CD14-positive monocyte (primary cell): ENCODE measurements at regions of chr7 and their contacts with region 1.

Region 1: GRCh38 chr7:24979863-24980533 is at the start of gene OSBPL3:
- DNase-seq: peak; percentile 92 to 96 (median 93)
- H3K4me3 ChIP-seq: peak within 1 kb of the TSS; percentile 87 to 94 (median 93)
- H3K4me3 Mint-ChIP-seq: peak within 1 kb of the TSS; percentile 98 to 99
- H3K27ac ChIP-seq: peak within 1 kb of the TSS; percentile 69 to 93
- H3K27ac Mint-ChIP-seq: peak within 1 kb of the TSS; percentile 90 to 97 (median 95)
- H3K4me1 ChIP-seq: peaks cover 34 to 51% of the 10 kb centered on the region in 2 donors
- H3K4me1 Mint-ChIP-seq: peaks cover 46% of the 10 kb centered on the region
- H3K27me3 ChIP-seq: peaks cover 4 to 11% of the 10 kb centered on the region in 2 donors
- H3K27me3 Mint-ChIP-seq: peaks cover 14 to 25% (median 14%) of the 10 kb centered on the region in 3 donors
- CTCF ChIP-seq: peak; percentile 32
- polyA plus RNA-seq, gene OSBPL3: 2.6 to 9.2 (median 3.7) TPM

Region 2: GRCh38 chr7:25087855-25088254 is 107.9 kb after region 1 on chr7:
- intact Hi-C with region 1: loop called in 1 of 2 experiments (anchors 5 kb)
- DNase-seq: peak; percentile 71 to 79 (median 73)
- H3K4me3 ChIP-seq: no peak overlapping the region
- H3K4me3 Mint-ChIP-seq: peak overlapping the region in 1 of 2 donors; percentile 37
- H3K27ac ChIP-seq: no peak overlapping the region
- H3K27ac Mint-ChIP-seq: peak overlapping the region in 1 of 7 donors; percentile 16
- H3K4me1 ChIP-seq: peaks cover 14% of the 10 kb centered on the region in 2 donors
- H3K4me1 Mint-ChIP-seq: peaks cover 14% of the 10 kb centered on the region
- H3K27me3 ChIP-seq: no peaks in the 10 kb centered on the region
- H3K27me3 Mint-ChIP-seq: peaks cover 2 to 6% (median 2%) of the 10 kb centered on the region in 3 donors
- CTCF ChIP-seq: no peak